Ascending aorta (tissue), 2 donors: ENCODE measurements at regions of chr5 and their contacts with region 1.

Region 1: GRCh38 chr5:137310051-137310730 is 188.9 kb downstream of the SPOCK1 start:
- DNase-seq: peak in 1 of 2 donors; percentile 65
- H3K4me3 ChIP-seq: no peak overlapping the region
- H3K27ac ChIP-seq: peak overlapping the region; percentile 0 to 34
- H3K4me1 ChIP-seq: peaks cover 0 to 14% of the 10 kb centered on the region in 2 donors
- H3K27me3 ChIP-seq: no peaks in the 10 kb centered on the region
- CTCF ChIP-seq: no peak

Region 2: GRCh38 chr5:137075163-137075970 is 234.8 kb before region 1 on chr5:
- intact Hi-C with region 1: loop called (anchors 5 kb)
- DNase-seq: no peak
- H3K4me3 ChIP-seq: no peak overlapping the region
- H3K27ac ChIP-seq: no peak overlapping the region
- H3K4me1 ChIP-seq: peaks cover 3 to 13% of the 10 kb centered on the region in 2 donors
- H3K27me3 ChIP-seq: no peaks in the 10 kb centered on the region
- CTCF ChIP-seq: no peak

Region 3: DNA sequence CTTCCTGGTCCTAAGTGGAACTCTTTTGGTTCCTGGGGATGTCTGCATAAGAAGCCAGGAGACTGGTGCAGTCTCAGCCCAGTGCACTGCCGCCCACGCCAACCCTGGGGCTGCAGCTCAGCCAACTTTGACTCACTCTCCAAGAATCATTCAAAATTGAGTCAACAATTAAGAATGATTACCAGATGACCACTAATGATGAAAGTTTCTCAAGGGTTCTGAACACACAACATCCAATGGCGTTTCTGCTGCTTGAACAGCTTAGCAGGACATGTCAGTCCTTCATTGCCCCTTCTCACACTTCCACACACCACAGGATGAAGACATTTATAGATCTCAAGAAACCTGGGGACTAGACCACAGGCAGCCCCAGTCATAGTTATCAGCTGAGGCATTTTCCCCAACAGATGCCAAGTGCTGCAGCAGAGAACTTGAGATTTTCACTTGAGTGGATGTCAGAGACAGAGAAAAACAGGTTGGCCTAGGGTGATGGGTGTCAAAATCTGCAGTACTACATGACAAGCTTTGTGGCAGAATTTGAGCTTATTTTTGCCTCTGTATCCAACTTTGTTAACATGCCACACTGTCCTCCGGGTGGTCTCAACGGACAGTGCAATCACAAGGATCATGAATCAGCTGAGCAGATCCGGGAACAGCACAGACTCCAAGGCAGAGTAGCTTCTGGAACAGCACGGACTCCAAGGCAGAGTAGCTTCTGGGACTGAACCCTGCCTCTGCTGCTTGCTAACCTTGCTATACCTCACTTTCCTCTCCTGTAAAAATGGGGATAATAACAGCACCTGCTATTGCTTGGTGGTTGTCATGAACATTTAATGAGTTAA is 167.2 kb before region 1 on chr5:
- intact Hi-C with region 1: loop called (anchors 5 kb)
- DNase-seq: peak in 1 of 2 donors; percentile 85
- H3K4me3 ChIP-seq: no peak overlapping the region
- H3K27ac ChIP-seq: peak overlapping the region; percentile 46 to 73
- H3K4me1 ChIP-seq: peaks cover 6 to 34% of the 10 kb centered on the region in 2 donors
- H3K27me3 ChIP-seq: no peaks in the 10 kb centered on the region
- CTCF ChIP-seq: no peak

Region 4: GRCh38 chr5:137201876-137202275 is 108.3 kb before region 1 on chr5:
- intact Hi-C with region 1: loop called (anchors 5 kb)
- DNase-seq: peak in 1 of 2 donors; percentile 85
- H3K4me3 ChIP-seq: no peak overlapping the region
- H3K27ac ChIP-seq: no peak overlapping the region
- H3K4me1 ChIP-seq: no peaks in the 10 kb centered on the region
- H3K27me3 ChIP-seq: no peaks in the 10 kb centered on the region
- CTCF ChIP-seq: peak; percentile 30 to 44 (median 35)

Region 5: GRCh38 chr5:137619191-137619870 is 309.1 kb after region 1 on chr5:
- intact Hi-C with region 1: loop called (anchors 10 kb)
- DNase-seq: peak in 1 of 2 donors; percentile 83
- H3K4me3 ChIP-seq: no peak overlapping the region
- H3K27ac ChIP-seq: peak overlapping the region; percentile 84 to 92
- H3K4me1 ChIP-seq: peaks cover 9 to 43% of the 10 kb centered on the region in 2 donors
- H3K27me3 ChIP-seq: no peaks in the 10 kb centered on the region
- CTCF ChIP-seq: no peak